ENCODE measurements at regions of chr12 and their contacts with region 1.

Region 1: GRCh38 chr12:107992870-107993451 is 136.1 kb upstream of the WSCD2 start:
- DNase-seq: peak; percentile 36 to 60
- H3K4me3 ChIP-seq: no peak overlapping the region
- H3K27ac ChIP-seq: no peak overlapping the region
- H3K4me1 ChIP-seq: no peaks in the 10 kb centered on the region
- H3K27me3 ChIP-seq: no peaks in the 10 kb centered on the region; a peak in 1 of 7 replicates
- CTCF ChIP-seq: peak; percentile 26 to 86 (median 82)
- EP300 ChIP-seq: no peak
- POLR2A ChIP-seq: no peak
- RAD21 ChIP-seq: peak; percentile 71 to 72

Region 2: DNA sequence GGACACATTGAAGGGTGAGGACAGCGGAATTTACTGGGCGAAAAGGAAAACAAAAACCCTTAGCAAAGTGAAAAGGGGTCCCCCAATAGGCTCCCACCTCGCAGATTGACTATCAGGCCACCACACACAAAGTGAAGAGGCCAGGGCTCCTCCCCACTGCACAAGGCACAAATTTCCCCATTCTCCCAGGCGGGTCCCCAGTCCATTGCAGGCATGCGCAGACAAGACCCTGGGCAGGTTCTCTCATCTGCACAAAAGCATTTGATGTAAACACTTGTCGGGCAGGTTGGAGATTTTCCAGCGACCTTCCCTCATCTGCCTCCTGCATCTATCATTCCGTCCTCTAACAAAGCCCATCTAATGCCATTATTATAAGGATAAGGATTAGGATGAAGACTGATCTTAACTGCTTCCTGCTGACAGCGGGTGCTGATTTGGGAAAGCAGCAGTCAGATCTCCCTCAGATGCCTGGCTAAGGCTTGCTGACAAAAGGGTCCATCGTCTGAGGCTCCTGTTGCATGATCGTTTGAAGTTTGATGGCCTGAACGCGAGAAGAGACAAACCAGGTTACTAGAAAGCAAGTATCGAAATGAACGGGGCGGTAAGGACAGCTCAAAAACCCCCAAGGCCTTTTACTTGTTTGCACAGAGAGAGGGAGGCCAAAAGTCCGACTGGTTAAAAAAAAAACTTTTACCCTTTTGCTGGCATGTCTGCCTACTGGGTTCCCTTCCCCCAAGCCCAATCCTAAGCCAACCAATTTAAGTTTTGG is 204.1 kb before region 1 on chr12:
- CTCF ChIA-PET with region 1: no interaction called
- POLR2A ChIA-PET with region 1: no interaction called
- DNase-seq: no peak
- H3K4me3 ChIP-seq: no peak overlapping the region
- H3K27ac ChIP-seq: no peak overlapping the region
- H3K4me1 ChIP-seq: no peaks in the 10 kb centered on the region
- H3K27me3 ChIP-seq: no peaks in the 10 kb centered on the region
- CTCF ChIP-seq: no peak
- EP300 ChIP-seq: no peak
- POLR2A ChIP-seq: no peak
- RAD21 ChIP-seq: no peak

Region 3: DNA sequence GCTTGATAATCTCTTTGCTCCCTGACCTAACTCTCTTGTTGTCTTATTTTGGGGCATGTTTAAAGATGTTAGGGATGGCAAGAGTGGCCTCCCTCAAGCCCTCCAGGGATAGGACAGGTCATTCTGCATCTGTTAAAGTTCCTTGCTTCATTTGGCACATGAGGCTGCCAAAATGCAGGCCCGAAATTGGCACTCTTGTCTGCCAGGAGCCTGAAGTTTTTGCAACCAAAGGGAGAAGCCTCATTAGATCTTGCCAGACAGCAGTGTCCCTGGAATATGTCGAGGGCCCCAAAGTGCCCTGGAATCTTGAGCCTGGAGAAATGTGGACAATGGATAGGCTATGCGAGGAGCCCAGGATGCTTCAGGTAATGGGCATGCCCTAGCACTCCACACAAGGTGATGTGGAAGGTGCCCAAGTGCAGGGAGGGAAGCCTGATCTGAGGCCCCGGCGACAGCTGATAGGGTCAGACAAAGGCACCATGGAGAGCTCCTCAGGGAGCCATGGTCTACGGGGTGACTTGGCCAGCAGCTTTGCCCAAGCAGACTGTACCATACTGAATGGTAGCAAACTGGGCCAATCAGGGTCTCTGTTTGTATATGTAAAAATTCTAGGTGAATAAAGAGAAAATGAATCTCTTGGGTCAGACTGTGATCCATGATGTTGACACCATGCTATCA is 36.9 kb before region 1 on chr12:
- CTCF ChIA-PET with region 1: interaction called, 10 read pairs
- POLR2A ChIA-PET with region 1: no interaction called
- DNase-seq: no peak
- H3K4me3 ChIP-seq: no peak overlapping the region
- H3K27ac ChIP-seq: no peak overlapping the region
- H3K4me1 ChIP-seq: no peaks in the 10 kb centered on the region
- H3K27me3 ChIP-seq: 0 out of 7 replicates have a peak, but pooled peaks cover 0 to 7% (median under 1%) of the 10 kb centered on the region in 4 experiments
- CTCF ChIP-seq: no peak
- EP300 ChIP-seq: no peak
- POLR2A ChIP-seq: no peak
- RAD21 ChIP-seq: no peak

Region 4: GRCh38 chr12:108017472-108018057 is 24.6 kb after region 1 on chr12:
- CTCF ChIA-PET with region 1: interaction called, 15 read pairs
- POLR2A ChIA-PET with region 1: no interaction called
- DNase-seq: no peak
- H3K4me3 ChIP-seq: no peak overlapping the region
- H3K27ac ChIP-seq: no peak overlapping the region
- H3K4me1 ChIP-seq: no peaks in the 10 kb centered on the region
- H3K27me3 ChIP-seq: no peaks in the 10 kb centered on the region
- CTCF ChIP-seq: no peak
- EP300 ChIP-seq: no peak
- POLR2A ChIP-seq: no peak
- RAD21 ChIP-seq: no peak

Region 5: DNA sequence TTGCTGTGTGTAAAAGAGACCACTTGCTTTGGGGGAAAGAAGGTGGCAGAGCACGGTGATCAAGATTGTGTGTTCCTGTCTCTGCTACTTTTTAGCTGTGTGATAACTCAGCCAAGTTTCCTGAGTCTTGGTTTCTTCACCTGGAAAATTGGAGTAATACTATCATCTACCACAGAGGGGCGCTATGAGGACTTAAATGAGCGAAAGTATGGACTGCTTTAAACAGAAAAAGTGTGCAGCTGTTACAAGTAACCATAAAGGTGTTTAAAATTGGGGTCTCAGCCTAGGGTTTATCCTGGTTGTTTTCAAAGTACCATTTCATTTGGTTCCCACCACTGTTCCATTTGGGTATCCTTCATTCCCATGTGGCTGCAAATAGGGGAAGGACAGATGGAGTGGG is 70.2 kb after region 1 on chr12:
- CTCF ChIA-PET with region 1: interaction called, 33 read pairs
- POLR2A ChIA-PET with region 1: no interaction called
- DNase-seq: no peak
- H3K4me3 ChIP-seq: no peak overlapping the region
- H3K27ac ChIP-seq: no peak overlapping the region
- H3K4me1 ChIP-seq: no peaks in the 10 kb centered on the region
- H3K27me3 ChIP-seq: no peaks in the 10 kb centered on the region; a peak in 1 of 7 replicates
- CTCF ChIP-seq: peak in 2 of 3 experiments; percentile 60 to 69; a peak in 2 of 4 replicates
- EP300 ChIP-seq: no peak
- POLR2A ChIP-seq: no peak
- RAD21 ChIP-seq: peak; percentile 83 to 88

Region 6: GRCh38 chr12:108193917-108194316 is 201.0 kb after region 1 on chr12:
- CTCF ChIA-PET with region 1: interaction called, 44 read pairs
- POLR2A ChIA-PET with region 1: interaction called, 5 read pairs
- DNase-seq: peak in 1 of 2 experiments; percentile 56
- H3K4me3 ChIP-seq: no peak overlapping the region
- H3K27ac ChIP-seq: no peak overlapping the region
- H3K4me1 ChIP-seq: peaks cover 0 to 5% (median 0%) of the 10 kb centered on the region in 4 experiments; a peak in 4 of 7 replicates
- H3K27me3 ChIP-seq: no peaks in the 10 kb centered on the region
- CTCF ChIP-seq: peak in 2 of 3 experiments; percentile 68 to 77; a peak in 3 of 4 replicates
- EP300 ChIP-seq: no peak
- POLR2A ChIP-seq: no peak
- RAD21 ChIP-seq: peak; percentile 83 to 89